ENCODE measurements at regions of chr1 and their contacts with region 1.

Region 1: GRCh38 chr1:176691251-176692228 is 228.6 kb downstream of the PAPPA2 start:
- DNase-seq: peak in 4 of 5 donors; percentile 34 to 60 (median 54)
- ATAC-seq: peak; percentile 53 to 67 (median 58)
- H3K4me3 ChIP-seq: no peak overlapping the region
- H3K27ac ChIP-seq: peak overlapping the region; percentile 47 to 92 (median 84)
- H3K4me1 ChIP-seq: peaks cover 0 to 35% (median 11%) of the 10 kb centered on the region in 12 donors
- H3K27me3 ChIP-seq: no peaks in the 10 kb centered on the region
- CTCF ChIP-seq: peak; percentile 38 to 78 (median 62)
- POLR2A ChIP-seq: no peak

Region 2: GRCh38 chr1:176559878-176560277 is 131.7 kb before region 1 on chr1:
- intact Hi-C with region 1: loop called (anchors 2 to 5 kb)
- DNase-seq: peak in 4 of 5 donors; percentile 28 to 51 (median 44)
- ATAC-seq: peak; percentile 88 to 95 (median 90)
- H3K4me3 ChIP-seq: no peak overlapping the region
- H3K27ac ChIP-seq: no peak overlapping the region
- H3K4me1 ChIP-seq: peaks cover 0 to 10% (median 0%) of the 10 kb centered on the region in 12 donors
- H3K27me3 ChIP-seq: peaks cover 0 to 16% (median 0%) of the 10 kb centered on the region in 9 donors
- CTCF ChIP-seq: peak; percentile 75 to 91 (median 84)
- POLR2A ChIP-seq: no peak

Region 3: GRCh38 chr1:176656257-176656995 is 35.1 kb before region 1 on chr1:
- intact Hi-C with region 1: loop called in 6 of 10 experiments (anchors 1 to 5 kb)
- DNase-seq: peak in 4 of 5 donors; percentile 36 to 51 (median 46)
- ATAC-seq: peak; percentile 99
- H3K4me3 ChIP-seq: no peak overlapping the region
- H3K27ac ChIP-seq: peak overlapping the region; percentile 73 to 96 (median 86)
- H3K4me1 ChIP-seq: peaks cover 0 to 23% (median 4%) of the 10 kb centered on the region in 12 donors
- H3K27me3 ChIP-seq: no peaks in the 10 kb centered on the region
- CTCF ChIP-seq: peak in 6 of 12 donors; percentile 12 to 46 (median 28)
- POLR2A ChIP-seq: no peak

Region 4: DNA sequence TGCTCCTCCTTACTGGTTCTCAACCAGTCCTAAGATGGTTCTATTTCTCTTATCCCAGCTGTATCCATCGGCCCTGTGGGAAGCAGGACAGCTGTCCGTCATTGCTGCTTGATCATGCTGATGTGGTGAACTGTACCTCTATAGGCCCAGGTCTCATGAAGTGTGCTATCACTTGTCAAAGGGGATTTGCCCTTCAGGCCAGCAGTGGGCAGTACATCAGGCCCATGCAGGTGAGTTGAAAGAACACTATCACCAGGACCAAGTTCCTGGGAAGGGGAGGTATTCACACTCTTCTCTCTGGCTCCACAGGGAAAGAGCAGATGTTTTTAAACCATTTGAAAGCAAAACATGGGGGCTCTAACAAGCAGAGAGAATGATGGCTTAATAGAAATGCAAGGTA is 74.1 kb after region 1 on chr1:
- intact Hi-C with region 1: no loop called
- DNase-seq: no peak
- ATAC-seq: no peak
- H3K4me3 ChIP-seq: no peak overlapping the region
- H3K27ac ChIP-seq: no peak overlapping the region
- H3K4me1 ChIP-seq: no peaks in the 10 kb centered on the region
- H3K27me3 ChIP-seq: no peaks in the 10 kb centered on the region
- CTCF ChIP-seq: no peak
- POLR2A ChIP-seq: no peak

Region 5: DNA sequence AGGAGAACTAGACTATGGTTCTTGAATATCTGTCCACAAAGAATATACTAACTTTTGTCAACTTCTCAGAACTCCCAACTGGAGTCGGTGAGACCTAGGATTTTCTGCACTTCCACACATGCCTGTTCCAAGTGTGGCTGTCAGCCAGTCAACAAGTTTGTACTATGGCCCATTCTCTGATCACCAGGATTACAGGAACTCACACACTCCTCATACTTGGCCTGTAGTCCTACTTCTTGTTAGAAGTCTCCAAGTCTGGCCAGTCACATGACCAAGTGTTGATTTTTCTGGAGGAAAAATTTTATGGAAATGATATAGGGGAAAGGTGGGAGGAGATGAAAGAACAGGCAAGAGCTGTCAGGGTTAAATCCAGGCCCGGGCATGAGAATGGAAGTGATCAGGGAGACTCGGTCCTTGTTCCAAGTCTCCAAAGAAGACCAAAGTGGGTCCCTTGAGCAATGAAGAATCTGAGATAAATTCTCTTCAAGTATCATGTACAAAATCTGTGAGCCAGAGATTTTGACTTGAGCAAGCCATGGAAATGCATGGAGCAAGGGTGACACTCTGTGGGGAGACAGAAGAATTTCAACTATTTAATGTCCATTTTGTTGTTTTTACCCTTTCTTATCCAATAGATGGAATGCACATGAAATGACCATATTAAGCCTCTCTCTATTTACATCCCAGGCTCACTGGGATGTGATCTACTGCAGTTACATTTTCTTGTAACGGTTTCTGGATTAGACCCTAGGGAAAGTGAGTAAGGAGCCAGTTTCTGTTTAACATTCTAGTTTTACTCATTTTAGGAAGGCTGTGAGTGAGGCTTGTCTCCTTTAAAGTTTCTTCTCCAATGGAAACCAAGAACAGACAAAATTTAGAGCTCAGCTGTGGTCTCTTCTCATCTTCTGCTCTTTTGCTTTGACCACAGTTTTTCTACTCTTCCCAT is 152.1 kb after region 1 on chr1:
- intact Hi-C with region 1: loop called in 8 of 10 experiments (anchors 1 to 10 kb)
- DNase-seq: peak in 3 of 5 donors; percentile 22 to 38 (median 33)
- ATAC-seq: peak; percentile 19 to 55 (median 40)
- H3K4me3 ChIP-seq: no peak overlapping the region
- H3K27ac ChIP-seq: no peak overlapping the region
- H3K4me1 ChIP-seq: peaks cover 0 to 25% (median 2%) of the 10 kb centered on the region in 12 donors
- H3K27me3 ChIP-seq: no peaks in the 10 kb centered on the region
- CTCF ChIP-seq: peak; percentile 42 to 77 (median 61)
- POLR2A ChIP-seq: no peak

Region 6: DNA sequence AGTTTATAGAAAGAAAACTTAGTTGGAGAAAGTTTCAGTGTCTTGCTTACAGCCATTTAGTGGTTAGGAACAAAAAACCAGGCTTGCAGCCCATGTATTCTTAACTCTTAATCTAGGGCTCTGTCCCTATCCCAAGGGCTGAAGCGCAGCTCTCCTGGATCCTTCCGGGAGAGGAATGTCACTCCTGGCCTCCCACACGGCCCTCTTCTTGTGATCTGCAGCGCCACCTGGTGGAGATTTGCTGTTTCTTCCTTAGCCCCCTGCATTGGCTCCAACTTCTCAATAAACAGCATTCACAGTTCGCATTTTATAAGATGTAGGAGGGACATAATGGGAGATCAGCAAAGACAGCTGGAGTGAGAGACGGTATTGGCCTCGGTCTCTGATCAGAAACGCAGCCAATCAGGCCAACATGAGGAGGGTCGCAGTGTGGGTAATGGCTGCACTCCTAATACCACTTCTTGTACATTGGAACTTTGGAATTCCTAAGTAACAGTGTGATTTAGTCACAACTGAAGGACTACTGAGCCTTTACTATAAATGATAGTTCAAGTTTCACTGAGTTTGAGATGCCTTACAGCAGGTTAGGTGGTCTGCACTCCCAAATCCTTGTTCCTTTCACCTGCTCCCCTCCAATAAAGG is 189.5 kb after region 1 on chr1:
- intact Hi-C with region 1: loop called in 3 of 10 experiments (anchors 5 to 10 kb)
- DNase-seq: peak; percentile 58 to 71 (median 68)
- ATAC-seq: peak; percentile 57 to 92 (median 80)
- H3K4me3 ChIP-seq: no peak overlapping the region
- H3K27ac ChIP-seq: no peak overlapping the region
- H3K4me1 ChIP-seq: peaks cover 0 to 5% (median 0%) of the 10 kb centered on the region in 12 donors
- H3K27me3 ChIP-seq: no peaks in the 10 kb centered on the region
- CTCF ChIP-seq: peak; percentile 69 to 87 (median 79)
- POLR2A ChIP-seq: no peak

Region 7: GRCh38 chr1:177525176-177525575 is 833.6 kb after region 1 on chr1:
- intact Hi-C with region 1: loop called in 1 of 10 experiments (anchors 5 kb)
- DNase-seq: peak in 4 of 5 donors; percentile 31 to 53 (median 42)
- ATAC-seq: peak; percentile 95 to 99 (median 98)
- H3K4me3 ChIP-seq: no peak overlapping the region
- H3K27ac ChIP-seq: no peak overlapping the region
- H3K4me1 ChIP-seq: peaks cover 0 to 8% (median 0%) of the 10 kb centered on the region in 12 donors
- H3K27me3 ChIP-seq: peaks cover 0 to 46% (median 7%) of the 10 kb centered on the region in 9 donors
- CTCF ChIP-seq: no peak
- POLR2A ChIP-seq: no peak

Measured in heart left ventricle (tissue), 16 donors.